Naive thymus-derived CD4-positive, alpha-beta T cell (primary cell): ENCODE measurements at regions of chrX and their contacts with region 1.

Region 1: GRCh38 chrX:21985332-21985777 is 44.8 kb downstream of the SMS start:
- DNase-seq: peak; percentile 10 to 74 (median 61)
- ATAC-seq: peak; percentile 100
- H3K4me3 ChIP-seq: no peak overlapping the region
- H3K4me3 Mint-ChIP-seq: no peak overlapping the region
- H3K27ac ChIP-seq: no peak overlapping the region
- H3K27ac Mint-ChIP-seq: peak overlapping the region in 1 of 9 donors; percentile 70
- H3K4me1 ChIP-seq: no peaks in the 10 kb centered on the region
- H3K4me1 Mint-ChIP-seq: peaks cover 0 to 10% (median 4%) of the 10 kb centered on the region in 7 donors
- H3K27me3 ChIP-seq: no peaks in the 10 kb centered on the region
- H3K27me3 Mint-ChIP-seq: no peaks in the 10 kb centered on the region

Region 2: GRCh38 chrX:21940356-21940829 is 45.0 kb before region 1 on chrX and contains the start of gene SMS:
- CTCF ChIA-PET with region 1: interaction called, 4 read pairs
- POLR2A ChIA-PET with region 1: no interaction called
- intact Hi-C with region 1: loop called in 1 of 2 experiments (anchors 5 kb)
- DNase-seq: peak; percentile 8 to 64 (median 16)
- ATAC-seq: peak; percentile 77
- H3K4me3 ChIP-seq: peak within 1 kb of the TSS; percentile 46
- H3K4me3 Mint-ChIP-seq: peak within 1 kb of the TSS; percentile 78 to 90 (median 84)
- H3K27ac ChIP-seq: peak within 1 kb of the TSS; percentile 62
- H3K27ac Mint-ChIP-seq: peak within 1 kb of the TSS; percentile 60 to 90 (median 80)
- H3K4me1 ChIP-seq: peaks cover 0 to 5% of the 10 kb centered on the region in 2 donors
- H3K4me1 Mint-ChIP-seq: peaks cover 8 to 22% (median 19%) of the 10 kb centered on the region in 7 donors
- H3K27me3 ChIP-seq: no peaks in the 10 kb centered on the region
- H3K27me3 Mint-ChIP-seq: no peaks in the 10 kb centered on the region
- total RNA-seq, gene SMS: 14.7 to 57.4 (median 20.4) TPM

Region 3: GRCh38 chrX:21972721-21973120 is 12.6 kb before region 1 on chrX:
- CTCF ChIA-PET with region 1: interaction called, 9 read pairs
- POLR2A ChIA-PET with region 1: no interaction called
- intact Hi-C with region 1: loop called (anchors 1 kb)
- DNase-seq: peak in 7 of 9 donors; percentile 11 to 48 (median 31)
- ATAC-seq: peak; percentile 83
- H3K4me3 ChIP-seq: no peak overlapping the region
- H3K4me3 Mint-ChIP-seq: peak overlapping the region in 9 of 10 donors; percentile 30 to 82 (median 61)
- H3K27ac ChIP-seq: no peak overlapping the region
- H3K27ac Mint-ChIP-seq: peak overlapping the region; percentile 82 to 98 (median 94)
- H3K4me1 ChIP-seq: peaks cover 10% of the 10 kb centered on the region in 2 donors
- H3K4me1 Mint-ChIP-seq: peaks cover 0 to 37% (median 26%) of the 10 kb centered on the region in 7 donors
- H3K27me3 ChIP-seq: no peaks in the 10 kb centered on the region
- H3K27me3 Mint-ChIP-seq: no peaks in the 10 kb centered on the region

Region 4: DNA sequence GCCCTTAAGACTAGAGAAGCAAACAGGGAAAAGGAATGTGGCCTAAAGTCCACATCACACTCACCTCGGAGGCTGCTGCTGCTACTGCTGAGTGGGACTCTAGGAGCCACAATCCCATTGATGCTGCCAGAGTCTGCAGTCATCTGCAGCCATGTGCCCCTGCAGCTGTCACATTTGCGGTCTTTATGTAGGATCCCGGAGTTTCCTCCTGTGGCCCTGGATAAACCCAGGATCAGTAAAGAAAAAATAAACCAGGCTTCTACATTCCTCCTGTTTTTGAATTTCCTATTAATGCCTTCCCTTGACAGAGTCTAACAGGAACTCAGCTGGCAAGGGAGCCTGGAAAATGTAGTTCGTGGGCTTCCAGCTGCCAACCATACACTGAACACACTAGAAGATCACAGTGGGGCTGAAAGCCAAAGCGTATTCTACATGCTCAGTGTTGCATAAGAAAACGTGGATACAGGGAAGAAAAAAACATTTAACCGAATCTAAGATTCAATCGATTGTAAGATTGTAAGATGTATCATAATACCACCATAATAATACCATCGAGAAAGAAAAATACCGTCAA is 36.5 kb after region 1 on chrX:
- CTCF ChIA-PET with region 1: no interaction called
- POLR2A ChIA-PET with region 1: no interaction called
- intact Hi-C with region 1: no loop called
- DNase-seq: no peak
- ATAC-seq: no peak
- H3K4me3 ChIP-seq: no peak overlapping the region
- H3K4me3 Mint-ChIP-seq: no peak overlapping the region
- H3K27ac ChIP-seq: no peak overlapping the region
- H3K27ac Mint-ChIP-seq: no peak overlapping the region
- H3K4me1 ChIP-seq: no peaks in the 10 kb centered on the region
- H3K4me1 Mint-ChIP-seq: peaks cover 0 to 2% (median 0%) of the 10 kb centered on the region in 7 donors
- H3K27me3 ChIP-seq: no peaks in the 10 kb centered on the region
- H3K27me3 Mint-ChIP-seq: no peaks in the 10 kb centered on the region

Region 5: GRCh38 chrX:22081475-22082092 is 96.2 kb after region 1 on chrX:
- CTCF ChIA-PET with region 1: no interaction called
- POLR2A ChIA-PET with region 1: no interaction called
- intact Hi-C with region 1: loop called in 1 of 2 experiments (anchors 10 kb)
- DNase-seq: peak in 6 of 9 donors; percentile 4 to 24 (median 13)
- ATAC-seq: peak; percentile 60
- H3K4me3 ChIP-seq: no peak overlapping the region
- H3K4me3 Mint-ChIP-seq: no peak overlapping the region
- H3K27ac ChIP-seq: no peak overlapping the region
- H3K27ac Mint-ChIP-seq: no peak overlapping the region
- H3K4me1 ChIP-seq: no peaks in the 10 kb centered on the region
- H3K4me1 Mint-ChIP-seq: no peaks in the 10 kb centered on the region
- H3K27me3 ChIP-seq: no peaks in the 10 kb centered on the region
- H3K27me3 Mint-ChIP-seq: no peaks in the 10 kb centered on the region

Region 6: DNA sequence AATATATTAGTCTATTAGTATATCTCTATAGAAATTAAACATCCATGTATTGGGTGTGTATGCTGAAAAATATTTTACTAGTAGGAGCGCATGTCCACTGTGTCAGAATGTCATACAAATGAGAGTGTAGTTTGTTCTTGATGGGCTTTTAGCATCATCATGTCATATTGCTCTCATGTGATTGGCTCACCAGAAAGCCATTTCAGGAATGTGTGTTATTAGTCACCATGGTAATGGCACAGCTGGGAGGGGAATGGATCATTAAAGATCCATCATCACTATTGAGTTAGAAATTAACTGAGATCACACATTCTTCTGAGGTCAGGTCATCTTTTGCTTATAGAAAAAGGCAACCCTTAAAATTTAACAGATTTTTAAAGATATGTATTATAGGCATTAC is 124.1 kb after region 1 on chrX:
- CTCF ChIA-PET with region 1: no interaction called
- POLR2A ChIA-PET with region 1: no interaction called
- intact Hi-C with region 1: no loop called
- DNase-seq: no peak
- ATAC-seq: no peak
- H3K4me3 ChIP-seq: no peak overlapping the region
- H3K4me3 Mint-ChIP-seq: no peak overlapping the region
- H3K27ac ChIP-seq: no peak overlapping the region
- H3K27ac Mint-ChIP-seq: no peak overlapping the region
- H3K4me1 ChIP-seq: no peaks in the 10 kb centered on the region
- H3K4me1 Mint-ChIP-seq: no peaks in the 10 kb centered on the region
- H3K27me3 ChIP-seq: no peaks in the 10 kb centered on the region
- H3K27me3 Mint-ChIP-seq: no peaks in the 10 kb centered on the region

Region 7: DNA sequence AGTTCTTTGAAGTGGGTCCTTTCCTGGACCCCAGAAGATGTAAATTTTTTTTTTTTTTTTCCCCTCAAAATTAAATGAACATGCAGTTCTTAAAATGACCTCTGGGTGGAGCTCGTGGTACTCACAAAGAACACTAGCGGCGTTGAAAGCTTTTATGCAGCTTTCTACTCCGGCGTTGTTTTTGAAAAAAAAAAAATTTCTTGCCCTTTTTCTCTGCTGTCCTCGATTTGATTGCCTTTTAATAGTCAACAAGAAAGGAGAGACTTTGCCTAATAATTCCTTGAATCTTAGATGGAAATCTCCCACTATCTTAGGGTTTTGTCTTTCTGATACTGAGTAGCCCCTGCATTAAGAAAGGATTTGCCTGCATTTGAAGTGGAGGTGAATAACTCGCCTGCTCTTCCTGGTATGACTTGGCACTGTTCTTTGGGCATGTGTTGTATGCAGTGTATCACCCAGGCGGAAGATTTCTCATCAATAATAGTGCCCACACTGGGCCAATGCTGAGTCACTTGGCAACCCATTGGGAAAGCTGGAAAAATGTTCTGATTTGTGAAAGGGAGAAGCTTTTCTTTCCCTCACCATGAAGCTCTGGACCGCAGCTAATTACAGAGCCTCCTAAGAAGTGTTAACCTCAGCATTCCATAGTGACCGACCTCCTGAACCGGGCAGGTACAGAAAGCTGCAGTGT is 150.8 kb after region 1 on chrX:
- CTCF ChIA-PET with region 1: interaction called, 4 read pairs
- POLR2A ChIA-PET with region 1: no interaction called
- intact Hi-C with region 1: loop called (anchors 1 kb)
- DNase-seq: peak in 6 of 9 donors; percentile 15 to 55 (median 45)
- ATAC-seq: peak; percentile 58
- H3K4me3 ChIP-seq: no peak overlapping the region
- H3K4me3 Mint-ChIP-seq: peak overlapping the region in 7 of 10 donors; percentile 57 to 77 (median 68)
- H3K27ac ChIP-seq: no peak overlapping the region
- H3K27ac Mint-ChIP-seq: no peak overlapping the region
- H3K4me1 ChIP-seq: no peaks in the 10 kb centered on the region
- H3K4me1 Mint-ChIP-seq: peaks cover 0 to 11% (median 6%) of the 10 kb centered on the region in 7 donors
- H3K27me3 ChIP-seq: no peaks in the 10 kb centered on the region
- H3K27me3 Mint-ChIP-seq: no peaks in the 10 kb centered on the region

Region 8: GRCh38 chrX:22192417-22193060 is 207.2 kb after region 1 on chrX:
- CTCF ChIA-PET with region 1: interaction called, 5 read pairs
- POLR2A ChIA-PET with region 1: no interaction called
- intact Hi-C with region 1: loop called (anchors 1 kb)
- DNase-seq: peak in 8 of 9 donors; percentile 4 to 49 (median 34)
- ATAC-seq: peak; percentile 70
- H3K4me3 ChIP-seq: no peak overlapping the region
- H3K4me3 Mint-ChIP-seq: no peak overlapping the region
- H3K27ac ChIP-seq: no peak overlapping the region
- H3K27ac Mint-ChIP-seq: no peak overlapping the region
- H3K4me1 ChIP-seq: no peaks in the 10 kb centered on the region
- H3K4me1 Mint-ChIP-seq: peaks cover 0 to 5% (median 2%) of the 10 kb centered on the region in 7 donors
- H3K27me3 ChIP-seq: no peaks in the 10 kb centered on the region
- H3K27me3 Mint-ChIP-seq: peaks cover 0 to 5% (median 0%) of the 10 kb centered on the region in 5 donors